Activated B cell treated with CpG ODN at 0.5 μM for 24 hours (primary cell): ENCODE measurements at regions of chr2 and their contacts with region 1.

Region 1: GRCh38 chr2:27322766-27323595 is at the start of gene MPV17:
- DNase-seq: peak; percentile 79
- ATAC-seq: peak; percentile 95
- H3K4me3 Mint-ChIP-seq: peak within 1 kb of the TSS; percentile 99
- H3K27ac Mint-ChIP-seq: peak within 1 kb of the TSS; percentile 96
- H3K4me1 Mint-ChIP-seq: peaks cover 25% of the 10 kb centered on the region
- H3K27me3 Mint-ChIP-seq: no peaks in the 10 kb centered on the region
- CTCF ChIP-seq: no peak
- total RNA-seq, gene MPV17: 78.1 and 98.3 TPM in 2 replicates

Region 2: DNA sequence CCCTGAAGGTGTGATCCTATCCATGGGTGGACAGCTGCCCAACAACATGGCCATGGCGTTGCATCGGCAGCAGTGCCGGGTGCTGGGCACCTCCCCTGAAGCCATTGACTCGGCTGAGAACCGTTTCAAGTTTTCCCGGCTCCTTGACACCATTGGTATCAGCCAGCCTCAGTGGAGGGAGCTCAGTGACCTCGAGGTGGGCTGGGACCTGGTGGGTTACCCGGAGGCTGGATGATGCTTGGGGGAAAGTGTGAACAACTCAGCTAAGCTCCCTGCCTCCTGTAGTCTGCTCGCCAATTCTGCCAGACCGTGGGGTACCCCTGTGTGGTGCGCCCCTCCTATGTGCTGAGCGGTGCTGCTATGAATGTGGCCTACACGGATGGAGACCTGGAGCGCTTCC is 89.6 kb before region 1 on chr2:
- CTCF ChIA-PET with region 1: no interaction called
- POLR2A ChIA-PET with region 1: no interaction called
- intact Hi-C with region 1: no loop called
- DNase-seq: no peak
- ATAC-seq: no peak
- H3K4me3 Mint-ChIP-seq: no peak overlapping the region
- H3K27ac Mint-ChIP-seq: no peak overlapping the region
- H3K4me1 Mint-ChIP-seq: no peaks in the 10 kb centered on the region
- H3K27me3 Mint-ChIP-seq: no peaks in the 10 kb centered on the region
- CTCF ChIP-seq: no peak

Region 3: DNA sequence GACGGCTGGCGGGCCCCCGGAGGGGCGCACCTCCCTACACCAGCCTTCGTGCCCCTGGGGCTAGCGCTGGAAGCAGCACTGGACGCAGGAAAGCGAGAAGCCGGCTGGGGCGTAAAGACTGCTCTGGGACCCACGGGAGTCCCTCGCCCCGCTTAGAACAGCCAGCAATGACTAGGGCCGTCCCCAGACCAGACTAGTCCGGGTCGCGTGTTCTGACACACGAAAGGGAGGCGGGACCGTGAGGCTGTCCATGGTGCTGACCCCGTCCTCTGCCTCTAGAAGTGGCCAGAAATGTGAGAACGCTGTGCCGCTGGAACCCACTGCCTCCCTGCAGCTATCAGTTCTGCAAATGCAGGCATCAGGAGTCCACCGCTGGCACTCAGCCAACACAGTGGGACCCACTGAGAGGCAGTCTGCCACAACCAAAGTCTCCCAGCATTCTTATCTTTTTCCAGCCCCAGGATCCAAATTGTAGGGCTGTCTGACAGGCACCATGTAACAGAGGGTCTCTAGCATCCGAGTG is 14.6 kb before region 1 on chr2 and contains the start of gene UCN:
- CTCF ChIA-PET with region 1: interaction called, 7 read pairs
- POLR2A ChIA-PET with region 1: interaction called, 13 read pairs
- intact Hi-C with region 1: loop called (anchors 2 kb)
- DNase-seq: no peak
- ATAC-seq: no peak
- H3K4me3 Mint-ChIP-seq: peak within 1 kb of the TSS; percentile 7
- H3K27ac Mint-ChIP-seq: no peak within 1 kb of the TSS
- H3K4me1 Mint-ChIP-seq: peaks cover 7% of the 10 kb centered on the region
- H3K27me3 Mint-ChIP-seq: peaks cover 18% of the 10 kb centered on the region
- CTCF ChIP-seq: no peak
- total RNA-seq, gene UCN: 1.0 and 1.2 TPM in 2 replicates

Region 4: DNA sequence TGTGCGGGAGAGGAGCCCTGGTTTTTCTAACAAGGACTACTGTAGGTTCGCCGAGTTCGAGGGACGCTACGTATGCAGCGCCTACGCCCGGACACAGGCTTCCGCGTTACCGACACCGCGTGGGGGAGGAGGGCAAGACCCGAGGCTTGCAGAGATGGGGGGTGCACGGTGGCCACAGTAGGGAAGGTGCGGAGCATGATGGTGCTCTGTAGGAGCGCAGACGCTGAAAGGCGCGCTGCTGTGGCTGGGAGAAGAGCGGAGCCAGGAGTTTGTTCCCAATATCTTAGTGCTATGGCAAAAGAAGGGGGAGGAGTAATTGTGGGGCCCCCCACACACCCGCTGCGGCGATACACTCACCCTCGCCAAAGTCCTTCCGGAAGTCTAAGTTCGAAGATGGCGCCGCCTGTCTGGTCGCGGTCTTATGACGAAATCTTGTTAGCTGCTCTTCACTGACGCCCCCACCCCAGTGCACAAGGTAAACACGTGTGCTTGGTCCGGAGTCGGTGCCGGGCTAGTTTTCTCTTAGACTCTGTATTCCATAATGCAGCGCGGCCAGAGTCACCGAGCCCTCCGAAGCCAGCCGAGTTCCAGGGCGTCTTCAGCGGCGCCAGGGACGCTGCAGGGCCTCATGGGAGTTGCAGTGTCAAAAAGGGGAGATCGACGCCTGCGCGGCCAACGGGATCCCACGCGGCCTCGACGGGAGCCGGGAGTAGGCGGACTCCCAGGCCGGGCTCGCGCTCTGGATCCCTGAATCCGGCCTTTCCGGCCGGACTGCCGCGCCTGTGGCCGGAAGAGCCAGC is 33.6 kb after region 1 on chr2 and contains the start of gene GTF3C2:
- CTCF ChIA-PET with region 1: no interaction called
- POLR2A ChIA-PET with region 1: interaction called, 20 read pairs
- intact Hi-C with region 1: loop called (anchors 1 kb)
- DNase-seq: peak; percentile 87
- ATAC-seq: peak; percentile 83
- H3K4me3 Mint-ChIP-seq: peak within 1 kb of the TSS; percentile 98
- H3K27ac Mint-ChIP-seq: peak within 1 kb of the TSS; percentile 100
- H3K4me1 Mint-ChIP-seq: peaks cover 53% of the 10 kb centered on the region
- H3K27me3 Mint-ChIP-seq: no peaks in the 10 kb centered on the region
- CTCF ChIP-seq: no peak
- total RNA-seq, gene GTF3C2: 91.7 and 119 TPM in 2 replicates

Region 5: DNA sequence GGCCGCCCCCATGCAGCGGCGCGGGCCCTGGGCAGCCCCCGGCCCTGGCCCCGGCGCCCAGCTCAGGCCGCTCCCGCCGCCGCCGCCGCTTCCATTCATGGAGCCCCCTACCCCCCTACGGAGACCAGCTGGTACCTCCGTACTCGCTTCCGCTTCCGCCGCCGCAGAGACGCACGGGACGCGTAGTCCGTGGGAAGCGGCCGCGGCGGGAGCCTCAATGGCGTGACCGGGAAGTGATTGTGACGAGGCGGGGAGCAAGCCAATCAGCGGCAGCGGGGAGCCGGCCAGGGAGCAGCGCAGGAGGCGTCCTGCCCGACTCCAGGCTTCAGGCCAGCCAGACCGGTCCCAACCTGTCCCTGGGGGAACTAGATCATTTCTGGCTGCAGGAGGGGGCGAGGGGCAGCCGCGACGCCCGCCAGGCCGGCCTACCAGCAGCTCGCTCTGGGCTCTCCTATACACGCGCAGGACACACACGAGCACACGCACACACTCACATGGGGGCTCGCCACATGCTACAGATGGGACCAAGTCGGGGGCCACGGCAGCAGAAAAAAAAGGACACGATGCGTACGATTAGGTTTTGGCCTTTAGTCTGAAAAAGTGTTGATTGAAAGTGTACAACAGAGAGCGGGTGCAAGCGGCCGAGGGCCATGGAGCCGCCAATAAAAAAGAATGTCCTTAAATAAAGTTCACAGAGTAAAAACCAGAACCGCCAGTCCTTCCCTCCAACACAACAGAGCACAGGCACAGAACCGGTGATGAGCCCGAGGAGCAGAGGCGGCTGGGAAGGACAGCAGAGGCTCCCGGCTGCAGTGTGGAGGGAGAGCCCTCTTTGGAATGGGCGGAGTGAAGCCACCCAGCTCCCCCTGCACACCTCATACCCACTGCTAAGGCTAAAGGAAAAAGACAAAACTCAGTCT is 57.9 kb after region 1 on chr2 and contains the start of gene ZNF513:
- CTCF ChIA-PET with region 1: no interaction called
- POLR2A ChIA-PET with region 1: interaction called, 5 read pairs
- intact Hi-C with region 1: loop called (anchors 2 kb)
- DNase-seq: peak; percentile 85
- ATAC-seq: peak; percentile 91
- H3K4me3 Mint-ChIP-seq: peak within 1 kb of the TSS; percentile 87
- H3K27ac Mint-ChIP-seq: peak within 1 kb of the TSS; percentile 89
- H3K4me1 Mint-ChIP-seq: peaks cover 29% of the 10 kb centered on the region
- H3K27me3 Mint-ChIP-seq: no peaks in the 10 kb centered on the region
- CTCF ChIP-seq: no peak
- total RNA-seq, gene ZNF513: 30.1 and 32.8 TPM in 2 replicates

Region 6: GRCh38 chr2:27582695-27583389 is 259.9 kb after region 1 on chr2 and contains the start of gene ZNF512:
- CTCF ChIA-PET with region 1: no interaction called
- POLR2A ChIA-PET with region 1: no interaction called
- intact Hi-C with region 1: loop called (anchors 1 kb)
- DNase-seq: peak; percentile 81
- ATAC-seq: peak; percentile 95
- H3K4me3 Mint-ChIP-seq: peak within 1 kb of the TSS; percentile 97
- H3K27ac Mint-ChIP-seq: peak within 1 kb of the TSS; percentile 90
- H3K4me1 Mint-ChIP-seq: peaks cover 48% of the 10 kb centered on the region
- H3K27me3 Mint-ChIP-seq: peaks cover 4% of the 10 kb centered on the region
- CTCF ChIP-seq: no peak
- total RNA-seq, gene ZNF512: 45.4 and 48.7 TPM in 2 replicates